Posterior vena cava (tissue), 2 donors: ENCODE measurements at regions of chr4 and their contacts with region 1.

Region 1: DNA sequence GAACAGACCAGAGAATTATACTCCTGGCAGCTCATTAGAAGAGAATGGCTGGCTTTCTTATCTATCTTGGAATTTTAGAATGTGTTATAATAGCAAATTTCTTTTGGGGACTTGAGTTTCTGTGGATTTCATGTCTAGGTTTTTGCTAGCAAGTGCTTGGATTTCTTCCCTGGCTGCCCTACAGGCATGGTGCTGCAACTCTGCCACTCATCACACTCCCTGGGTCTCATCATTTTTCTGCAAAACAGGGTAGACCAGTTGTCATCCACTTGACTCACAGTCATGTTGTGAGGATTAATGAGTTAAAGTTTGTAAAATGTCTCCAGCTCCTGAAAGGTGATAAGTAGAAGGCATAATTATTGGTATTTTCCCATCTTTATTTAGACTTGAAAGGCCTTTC is 60.7 kb upstream of the LCORL start:
- DNase-seq: no peak

Region 2: DNA sequence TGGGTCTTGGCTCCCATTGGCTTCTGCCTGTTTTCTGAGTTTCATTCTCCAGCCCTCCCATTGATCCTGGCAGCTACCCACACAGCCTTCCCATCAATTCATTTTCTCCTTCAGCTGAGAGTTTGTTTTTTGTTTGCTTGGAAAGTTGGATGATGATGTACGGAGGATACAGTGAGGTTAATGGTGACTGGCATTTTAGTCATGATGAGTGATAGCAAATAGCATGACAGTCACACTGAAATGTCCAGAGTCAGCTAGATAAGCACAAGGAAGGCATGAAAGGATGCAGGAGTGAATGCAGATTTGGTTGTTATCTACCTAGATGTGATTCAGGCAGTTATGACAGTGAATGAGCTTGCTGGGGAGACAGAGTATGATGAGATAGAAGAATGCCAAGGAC is 30.1 kb before region 1 on chr4:
- intact Hi-C with region 1: loop called in 1 of 2 experiments (anchors 2 kb)
- DNase-seq: no peak

Region 3: DNA sequence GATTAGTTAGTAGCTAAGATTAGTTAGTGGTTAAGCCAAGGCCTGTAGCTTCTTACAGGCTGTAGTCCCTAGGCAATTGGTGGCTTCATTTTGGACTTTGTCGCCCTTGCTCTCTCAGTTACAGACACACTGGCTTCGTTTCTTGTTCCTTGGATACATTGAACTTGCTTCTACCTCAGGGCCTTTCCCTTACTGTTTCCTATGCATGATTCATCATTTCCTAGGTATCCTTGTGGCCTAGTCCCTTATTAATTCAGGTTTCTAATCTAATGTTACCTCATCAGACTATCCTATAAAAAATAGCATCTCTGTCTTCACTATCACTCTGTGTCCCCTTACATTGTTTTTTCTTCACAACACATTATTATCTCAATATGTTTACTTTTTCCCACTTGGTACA is 15.2 kb before region 1 on chr4:
- intact Hi-C with region 1: loop called in 1 of 2 experiments (anchors 2 kb)
- DNase-seq: no peak